IMR-90 (cell line): ENCODE measurements at regions of chr1 and their contacts with region 1.

Region 1: DNA sequence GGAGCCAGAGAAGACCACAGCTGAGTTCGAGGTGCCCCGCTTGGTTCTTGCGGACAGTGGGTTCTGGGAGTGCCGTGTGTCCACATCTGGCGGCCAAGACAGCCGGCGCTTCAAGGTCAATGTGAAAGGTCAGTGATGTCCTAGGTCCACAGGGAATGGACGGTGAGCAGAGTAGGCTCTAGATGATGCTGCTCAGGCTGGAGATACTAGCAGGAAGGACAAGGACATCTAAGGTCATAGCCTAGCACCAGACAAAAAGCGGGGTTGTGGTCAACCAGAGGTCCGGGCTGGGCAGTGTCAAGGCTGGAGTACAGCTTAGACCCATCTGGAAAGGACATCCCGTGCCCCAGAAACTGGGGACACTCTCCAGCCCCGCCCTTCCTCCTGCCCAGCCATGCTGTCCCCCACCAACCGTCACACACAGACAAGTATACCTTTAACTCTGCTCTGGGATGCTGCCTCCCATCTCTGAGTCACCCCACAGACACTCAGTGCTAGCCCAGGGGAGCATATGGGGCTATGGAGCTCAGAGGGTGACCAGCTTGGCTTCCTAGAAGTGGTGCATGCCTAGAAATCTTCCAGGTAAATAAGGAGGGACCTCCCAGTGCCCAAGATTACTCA is 8.7 kb downstream of the TIE1 start:
- DNase-seq: peak; percentile 23
- ATAC-seq: peak; percentile 70; the same call in 1 of the 2 replicates
- H3K4me3 ChIP-seq: no peak overlapping the region
- H3K27ac ChIP-seq: no peak overlapping the region
- H3K4me1 ChIP-seq: no peaks in the 10 kb centered on the region
- H3K27me3 ChIP-seq: peaks cover 8% of the 10 kb centered on the region; the same call in 1 of the 2 replicates
- CTCF ChIP-seq: no peak
- POLR2A ChIP-seq: no peak
- RAD21 ChIP-seq: no peak

Region 2: GRCh38 chr1:42692461-42692860 is 617.1 kb before region 1 on chr1:
- CTCF ChIA-PET with region 1: no interaction called
- POLR2A ChIA-PET with region 1: no interaction called
- dilution Hi-C with region 1: no loop called
- in situ Hi-C with region 1: no loop called
- intact Hi-C with region 1: no loop called
- DNase-seq: no peak
- ATAC-seq: no peak
- H3K4me3 ChIP-seq: no peak overlapping the region
- H3K27ac ChIP-seq: no peak overlapping the region
- H3K4me1 ChIP-seq: peaks cover 16% of the 10 kb centered on the region
- H3K27me3 ChIP-seq: no peaks in the 10 kb centered on the region
- CTCF ChIP-seq: no peak
- POLR2A ChIP-seq: no peak
- RAD21 ChIP-seq: no peak

Region 3: DNA sequence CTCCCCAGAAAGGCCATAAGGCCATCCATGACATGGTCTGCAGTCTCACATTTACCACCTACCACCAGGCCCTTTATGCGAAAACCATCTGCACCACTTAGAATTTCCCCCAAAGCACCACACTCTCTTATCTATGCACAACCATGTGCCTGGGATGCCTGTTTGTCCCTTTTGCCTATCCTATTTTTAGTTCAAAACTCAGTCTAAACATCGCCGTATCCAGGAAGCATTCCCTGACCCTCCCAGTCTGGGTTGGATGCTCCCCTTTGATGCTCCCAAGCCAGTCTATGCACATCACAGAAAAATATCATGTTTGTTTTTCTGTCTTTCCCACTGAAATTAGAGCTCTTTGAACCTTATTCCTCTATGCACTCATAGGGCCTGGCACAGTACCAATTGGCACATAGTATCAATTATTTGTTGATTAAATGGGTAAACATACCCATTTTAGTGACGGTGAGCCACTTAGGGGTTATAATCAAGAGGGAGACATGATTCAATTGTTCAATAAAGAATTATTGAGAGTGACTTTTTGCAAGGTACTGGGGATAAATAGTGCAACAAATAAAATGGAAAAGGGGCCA is 34.8 kb after region 1 on chr1:
- CTCF ChIA-PET with region 1: no interaction called
- POLR2A ChIA-PET with region 1: no interaction called
- dilution Hi-C with region 1: no loop called
- in situ Hi-C with region 1: loop called (anchors 5 kb)
- intact Hi-C with region 1: no loop called
- DNase-seq: no peak
- ATAC-seq: no peak
- H3K4me3 ChIP-seq: no peak overlapping the region
- H3K27ac ChIP-seq: no peak overlapping the region
- H3K4me1 ChIP-seq: peaks cover 10% of the 10 kb centered on the region
- H3K27me3 ChIP-seq: peaks cover 7% of the 10 kb centered on the region; the same call in 1 of the 2 replicates
- CTCF ChIP-seq: no peak
- POLR2A ChIP-seq: no peak
- RAD21 ChIP-seq: no peak

Region 4: DNA sequence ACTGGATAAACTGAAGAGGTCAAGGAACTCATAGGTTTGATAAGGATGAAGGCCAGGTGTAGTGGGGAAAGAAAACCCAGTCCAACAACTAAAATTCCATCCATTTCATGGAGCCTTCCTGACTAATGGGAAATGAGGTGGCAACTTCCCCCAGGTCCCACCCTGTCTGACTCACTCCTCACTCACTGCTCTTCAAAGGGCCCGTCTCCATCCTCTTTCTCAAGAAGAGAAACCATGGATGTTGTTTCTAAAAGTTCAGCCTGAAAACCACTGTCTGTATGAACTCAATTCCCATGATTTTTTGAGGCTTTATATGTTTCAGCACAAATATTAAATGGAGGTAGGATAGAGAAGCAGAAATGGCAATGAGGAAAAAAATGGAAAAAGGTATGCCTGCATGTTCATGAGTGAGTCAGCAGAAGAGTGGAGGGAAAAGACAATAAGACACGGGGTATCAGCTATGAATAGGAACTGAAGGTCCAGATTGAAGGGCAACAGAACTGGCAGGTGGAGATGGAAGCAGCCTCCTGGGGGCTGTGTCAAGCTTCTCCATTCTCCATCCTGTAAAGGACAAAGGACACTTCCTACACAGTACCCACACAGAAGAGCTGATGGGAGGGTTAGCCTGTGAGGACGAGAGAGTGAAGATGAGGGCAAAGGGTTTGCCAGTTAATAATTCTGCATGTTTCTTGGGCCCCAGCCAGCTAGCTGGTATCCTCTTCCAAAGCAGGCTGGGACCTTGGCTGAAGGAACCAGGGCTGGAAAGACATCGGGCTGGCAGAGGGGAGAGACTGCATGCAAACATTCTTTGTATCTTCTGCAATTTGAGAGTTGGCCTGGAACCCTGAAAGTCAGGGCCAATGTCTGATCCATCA is 63.8 kb after region 1 on chr1:
- CTCF ChIA-PET with region 1: no interaction called
- POLR2A ChIA-PET with region 1: no interaction called
- dilution Hi-C with region 1: no loop called
- in situ Hi-C with region 1: no loop called
- intact Hi-C with region 1: no loop called
- DNase-seq: peak; percentile 88
- ATAC-seq: peak; percentile 42
- H3K4me3 ChIP-seq: no peak overlapping the region
- H3K27ac ChIP-seq: peak overlapping the region; percentile 60
- H3K4me1 ChIP-seq: peaks cover 13% of the 10 kb centered on the region
- H3K27me3 ChIP-seq: no peaks in the 10 kb centered on the region
- CTCF ChIP-seq: no peak
- POLR2A ChIP-seq: no peak
- RAD21 ChIP-seq: no peak

Region 5: DNA sequence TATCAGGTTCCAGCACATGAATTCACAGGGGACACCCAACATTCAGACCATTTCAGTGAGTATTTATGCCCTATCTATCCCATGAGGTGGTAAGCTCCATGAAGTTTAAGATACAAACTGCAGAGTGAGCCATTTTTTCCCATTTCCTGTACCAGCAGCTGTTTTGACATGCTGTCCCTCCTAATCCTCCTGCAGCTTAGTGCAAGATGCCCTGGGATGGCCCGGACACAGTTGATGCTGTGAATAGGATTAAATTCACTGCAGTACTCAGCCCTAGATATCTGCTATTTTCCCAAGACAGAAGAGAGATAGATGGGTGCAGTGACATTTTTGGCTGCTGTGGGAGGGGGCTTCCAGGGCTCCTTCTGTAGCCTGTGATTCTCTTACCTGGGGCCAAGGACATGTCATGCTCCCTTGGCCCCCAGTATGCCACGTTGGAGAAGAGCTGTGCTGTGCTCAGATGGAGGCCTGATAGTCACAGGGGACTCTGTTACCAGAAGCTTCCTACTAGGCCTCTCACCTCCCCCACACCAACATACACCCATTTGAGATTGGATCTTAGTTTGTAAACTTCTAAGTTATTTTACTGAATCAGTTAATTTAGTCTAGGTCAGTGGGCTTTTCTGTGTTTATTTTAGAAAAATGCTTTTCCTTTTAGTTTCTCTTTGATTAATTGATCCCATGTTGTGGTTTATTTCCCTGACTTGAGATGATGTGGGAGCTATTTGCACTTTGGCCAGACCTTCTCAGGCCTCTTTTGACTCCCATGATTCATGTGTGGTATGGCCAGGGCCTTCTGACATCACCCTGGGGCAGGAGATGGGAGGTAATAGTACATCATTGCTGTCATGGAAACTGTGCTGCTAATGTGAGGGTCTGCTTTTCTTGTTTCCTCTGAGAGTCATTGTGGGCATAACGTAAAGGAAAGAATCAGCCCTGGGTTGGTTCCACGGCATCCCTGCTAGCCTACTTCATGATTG is 490.4 kb after region 1 on chr1:
- CTCF ChIA-PET with region 1: no interaction called
- POLR2A ChIA-PET with region 1: no interaction called
- dilution Hi-C with region 1: no loop called
- in situ Hi-C with region 1: no loop called
- intact Hi-C with region 1: no loop called
- DNase-seq: peak; percentile 95
- ATAC-seq: peak; percentile 93
- H3K4me3 ChIP-seq: no peak overlapping the region
- H3K27ac ChIP-seq: peak overlapping the region; percentile 9; the same call in 1 of the 2 replicates
- H3K4me1 ChIP-seq: peaks cover 10% of the 10 kb centered on the region
- H3K27me3 ChIP-seq: no peaks in the 10 kb centered on the region
- CTCF ChIP-seq: no peak
- POLR2A ChIP-seq: no peak
- RAD21 ChIP-seq: no peak